ENCODE measurements at regions of chr2 and their contacts with region 1.

Region 1: GRCh38 chr2:18520451-18521425 is 39.7 kb downstream of the RDH14 start:
- DNase-seq: peak; percentile 86 to 88
- ATAC-seq: peak; percentile 84 to 92 (median 86)
- H3K4me3 ChIP-seq: peak overlapping the region in 6 of 10 donors; percentile 0 to 37 (median 8)
- H3K27ac ChIP-seq: peak overlapping the region in 9 of 10 donors; percentile 37 to 79 (median 64)
- H3K4me1 ChIP-seq: peaks cover 8 to 47% (median 26%) of the 10 kb centered on the region in 9 donors
- H3K27me3 ChIP-seq: no peaks in the 10 kb centered on the region
- CTCF ChIP-seq: peak; percentile 82 to 94 (median 90)

Region 2: DNA sequence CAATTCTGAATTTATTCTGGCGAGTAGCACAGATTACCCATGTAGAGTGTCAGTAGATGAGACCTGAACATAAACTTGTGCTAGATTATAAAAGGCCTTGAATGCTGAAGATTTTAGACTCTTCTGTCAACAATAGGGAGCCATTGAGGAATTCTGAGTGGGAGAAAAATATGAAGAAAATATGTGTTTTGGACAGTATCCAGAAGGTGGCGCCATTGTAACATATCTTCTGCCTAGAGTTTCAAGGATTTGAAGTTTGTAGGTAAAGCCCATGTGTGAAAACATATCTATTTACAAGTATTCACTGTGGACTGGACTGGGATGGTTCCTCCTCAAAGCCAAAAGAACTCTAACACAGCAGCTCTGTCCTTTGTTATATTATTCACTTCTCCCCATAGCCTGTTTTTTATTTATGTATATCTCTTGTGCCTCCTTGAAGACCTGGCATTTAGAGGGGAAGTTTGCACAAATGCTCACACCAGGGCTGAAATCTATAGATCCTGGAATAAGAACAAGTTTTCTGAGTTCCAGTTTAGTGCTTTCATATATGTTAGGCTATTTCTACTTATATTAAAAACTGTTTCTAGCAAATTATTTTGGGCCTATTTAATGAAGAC is 85.2 kb before region 1 on chr2:
- intact Hi-C with region 1: loop called in 3 of 10 experiments (anchors 5 to 10 kb)
- DNase-seq: peak in 1 of 2 donors; percentile 35
- ATAC-seq: peak in 3 of 8 donors; percentile 27 to 57 (median 49)
- H3K4me3 ChIP-seq: no peak overlapping the region
- H3K27ac ChIP-seq: no peak overlapping the region
- H3K4me1 ChIP-seq: peaks cover 0 to 13% (median 4%) of the 10 kb centered on the region in 9 donors
- H3K27me3 ChIP-seq: no peaks in the 10 kb centered on the region
- CTCF ChIP-seq: peak; percentile 21 to 65 (median 59)

Region 3: GRCh38 chr2:18560031-18560796 is 39.5 kb after region 1 on chr2 and contains the start of gene RDH14:
- intact Hi-C with region 1: loop called in 3 of 10 experiments (anchors 2 to 5 kb)
- DNase-seq: peak; percentile 92 to 96
- ATAC-seq: peak; percentile 96 to 98 (median 98)
- H3K4me3 ChIP-seq: peak within 1 kb of the TSS; percentile 52 to 93 (median 85)
- H3K27ac ChIP-seq: peak within 1 kb of the TSS; percentile 96 to 99 (median 98)
- H3K4me1 ChIP-seq: peaks cover 0 to 46% (median 41%) of the 10 kb centered on the region in 9 donors
- H3K27me3 ChIP-seq: no peaks in the 10 kb centered on the region
- CTCF ChIP-seq: peak in 1 of 9 donors; percentile 17
- total RNA-seq, gene RDH14: 40.8 to 54.8 (median 47.5) TPM

Region 4: GRCh38 chr2:18599509-18600254 is 78.9 kb after region 1 on chr2:
- intact Hi-C with region 1: loop called in 1 of 10 experiments (anchors 10 kb)
- DNase-seq: no peak
- ATAC-seq: peak in 6 of 8 donors; percentile 23 to 64 (median 28)
- H3K4me3 ChIP-seq: no peak overlapping the region
- H3K27ac ChIP-seq: peak overlapping the region in 6 of 10 donors; percentile 15 to 71 (median 30)
- H3K4me1 ChIP-seq: peaks cover 0 to 36% (median 20%) of the 10 kb centered on the region in 9 donors
- H3K27me3 ChIP-seq: no peaks in the 10 kb centered on the region
- CTCF ChIP-seq: no peak

Region 5: GRCh38 chr2:18741895-18742732 is 221.4 kb after region 1 on chr2:
- intact Hi-C with region 1: loop called in 9 of 10 experiments (anchors 2 to 5 kb)
- DNase-seq: peak; percentile 15 to 36
- ATAC-seq: peak; percentile 61 to 88 (median 81)
- H3K4me3 ChIP-seq: no peak overlapping the region
- H3K27ac ChIP-seq: peak overlapping the region in 6 of 10 donors; percentile 9 to 39 (median 26)
- H3K4me1 ChIP-seq: peaks cover 0 to 20% (median 4%) of the 10 kb centered on the region in 9 donors
- H3K27me3 ChIP-seq: no peaks in the 10 kb centered on the region
- CTCF ChIP-seq: peak in 7 of 9 donors; percentile 15 to 55 (median 39)

Region 6: DNA sequence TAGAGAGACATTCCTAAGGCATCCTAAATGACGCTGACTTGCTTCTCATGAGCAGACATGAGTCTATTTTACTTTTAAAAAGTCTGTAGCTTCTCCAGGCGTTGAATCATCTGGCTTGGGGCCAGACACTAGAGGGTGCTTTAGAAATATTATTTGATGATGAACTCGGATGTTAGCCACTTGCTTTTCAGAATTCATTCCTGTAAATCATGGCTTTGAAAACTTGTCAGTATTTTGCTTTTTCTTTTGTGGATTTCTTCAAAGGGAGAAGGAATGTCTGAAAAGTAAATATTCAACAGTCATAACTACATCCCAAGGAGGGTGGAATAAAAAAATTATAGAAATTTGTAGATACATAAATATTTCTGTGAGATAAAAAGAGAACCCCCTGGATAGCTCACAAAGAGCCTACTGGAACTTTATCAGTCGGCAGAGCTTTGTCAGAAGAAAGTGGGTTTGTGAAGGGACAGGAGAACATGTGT is 466.9 kb after region 1 on chr2:
- intact Hi-C with region 1: loop called in 1 of 10 experiments (anchors 10 kb)
- DNase-seq: peak; percentile 29 to 81
- ATAC-seq: peak in 5 of 8 donors; percentile 58 to 68 (median 66)
- H3K4me3 ChIP-seq: no peak overlapping the region
- H3K27ac ChIP-seq: no peak overlapping the region
- H3K4me1 ChIP-seq: peaks cover 0 to 31% (median 17%) of the 10 kb centered on the region in 9 donors
- H3K27me3 ChIP-seq: no peaks in the 10 kb centered on the region
- CTCF ChIP-seq: peak in 8 of 9 donors; percentile 7 to 59 (median 34)